ENCODE measurements at regions of chr17 and their contacts with region 1.

Region 1: GRCh38 chr17:35849469-35850348 is 19.0 kb downstream of the HEATR9 start:
- DNase-seq: peak; percentile 24 to 86 (median 61)
- ATAC-seq: peak; percentile 77
- H3K4me3 ChIP-seq: no peak overlapping the region
- H3K4me3 Mint-ChIP-seq: no peak overlapping the region
- H3K27ac ChIP-seq: peak overlapping the region in 1 of 2 experiments; percentile 34
- H3K27ac Mint-ChIP-seq: peak overlapping the region; percentile 53
- H3K4me1 ChIP-seq: no peaks in the 10 kb centered on the region
- H3K4me1 Mint-ChIP-seq: peaks cover 19% of the 10 kb centered on the region
- H3K27me3 ChIP-seq: no peaks in the 10 kb centered on the region
- H3K27me3 Mint-ChIP-seq: no peaks in the 10 kb centered on the region
- CTCF ChIP-seq: peak; percentile 92

Region 2: DNA sequence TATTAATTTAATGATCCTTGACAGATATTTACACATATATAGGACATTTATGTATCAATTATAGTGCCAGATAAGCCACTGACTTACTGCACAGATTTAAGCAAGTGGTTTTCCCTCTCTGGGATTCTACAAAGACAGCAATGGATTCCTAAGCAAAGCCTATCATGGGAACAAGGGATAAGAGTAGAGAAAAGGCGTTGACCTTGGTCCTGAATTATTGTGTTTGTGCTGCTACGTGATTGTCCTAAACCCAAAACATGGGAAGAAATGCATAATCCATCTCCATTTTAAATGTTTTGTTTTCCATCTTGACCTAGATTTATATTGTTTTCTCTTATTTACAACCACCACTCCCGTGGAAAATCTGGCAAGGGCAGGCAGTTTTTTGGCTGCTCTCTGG is 490.3 kb before region 1 on chr17:
- CTCF ChIA-PET with region 1: no interaction called
- POLR2A ChIA-PET with region 1: no interaction called
- intact Hi-C with region 1: no loop called
- DNase-seq: no peak
- ATAC-seq: no peak
- H3K4me3 ChIP-seq: no peak overlapping the region
- H3K4me3 Mint-ChIP-seq: no peak overlapping the region
- H3K27ac ChIP-seq: no peak overlapping the region
- H3K27ac Mint-ChIP-seq: no peak overlapping the region
- H3K4me1 ChIP-seq: no peaks in the 10 kb centered on the region
- H3K4me1 Mint-ChIP-seq: peaks cover 16% of the 10 kb centered on the region
- H3K27me3 ChIP-seq: no peaks in the 10 kb centered on the region
- H3K27me3 Mint-ChIP-seq: no peaks in the 10 kb centered on the region
- CTCF ChIP-seq: no peak

Region 3: GRCh38 chr17:35666967-35667532 is 182.7 kb before region 1 on chr17:
- CTCF ChIA-PET with region 1: no interaction called
- POLR2A ChIA-PET with region 1: no interaction called
- intact Hi-C with region 1: no loop called
- DNase-seq: no peak
- ATAC-seq: no peak
- H3K4me3 ChIP-seq: no peak overlapping the region
- H3K4me3 Mint-ChIP-seq: no peak overlapping the region
- H3K27ac ChIP-seq: no peak overlapping the region
- H3K27ac Mint-ChIP-seq: no peak overlapping the region
- H3K4me1 ChIP-seq: no peaks in the 10 kb centered on the region
- H3K4me1 Mint-ChIP-seq: no peaks in the 10 kb centered on the region
- H3K27me3 ChIP-seq: no peaks in the 10 kb centered on the region
- H3K27me3 Mint-ChIP-seq: no peaks in the 10 kb centered on the region
- CTCF ChIP-seq: no peak

Region 4: DNA sequence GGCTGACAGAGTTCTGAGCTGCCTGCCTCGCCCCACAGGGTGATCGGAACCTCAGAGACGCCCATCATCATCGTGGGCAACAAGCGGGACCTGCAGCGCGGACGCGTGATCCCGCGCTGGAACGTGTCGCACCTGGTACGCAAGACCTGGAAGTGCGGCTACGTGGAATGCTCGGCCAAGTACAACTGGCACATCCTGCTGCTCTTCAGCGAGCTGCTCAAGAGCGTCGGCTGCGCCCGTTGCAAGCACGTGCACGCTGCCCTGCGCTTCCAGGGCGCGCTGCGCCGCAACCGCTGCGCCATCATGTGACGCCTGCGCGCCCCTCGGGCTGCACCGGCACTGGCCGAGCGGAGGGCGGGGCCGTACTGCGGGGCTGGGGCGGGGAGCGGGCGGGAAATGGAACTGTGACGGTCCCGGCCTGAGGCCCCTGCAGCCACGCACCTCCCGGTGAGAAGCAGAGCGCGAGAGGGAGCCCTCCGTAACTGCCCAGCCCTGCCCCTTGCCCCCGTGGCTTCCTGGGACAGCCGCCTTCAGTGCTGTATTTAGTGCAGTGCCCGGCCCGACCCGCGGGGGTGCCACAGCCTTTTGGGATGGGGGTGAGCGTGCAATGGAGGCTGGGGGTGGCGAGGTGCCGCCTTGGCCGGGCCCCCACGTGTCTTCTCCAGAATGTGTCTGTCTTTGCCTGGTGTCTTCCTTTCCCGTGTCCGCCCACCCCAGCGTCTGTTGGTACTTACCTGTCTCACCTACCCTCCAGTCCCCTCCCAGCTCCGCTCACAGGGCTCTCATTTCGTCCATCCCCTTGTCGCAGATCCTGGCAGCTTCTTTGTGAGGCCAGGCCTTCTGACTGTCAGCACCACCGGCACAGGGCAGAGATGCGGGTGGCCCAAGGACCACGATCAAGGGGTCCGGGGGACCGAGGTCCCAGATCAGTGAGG is 108.4 kb before region 1 on chr17:
- CTCF ChIA-PET with region 1: no interaction called
- POLR2A ChIA-PET with region 1: no interaction called
- intact Hi-C with region 1: no loop called
- DNase-seq: peak in 2 of 9 experiments; percentile 26 to 39
- ATAC-seq: peak; percentile 63
- H3K4me3 ChIP-seq: no peak overlapping the region
- H3K4me3 Mint-ChIP-seq: peak overlapping the region; percentile 58
- H3K27ac ChIP-seq: no peak overlapping the region
- H3K27ac Mint-ChIP-seq: no peak overlapping the region
- H3K4me1 ChIP-seq: peaks cover 11% of the 10 kb centered on the region
- H3K4me1 Mint-ChIP-seq: peaks cover 6% of the 10 kb centered on the region
- H3K27me3 ChIP-seq: peaks cover 8 to 9% of the 10 kb centered on the region in 2 experiments
- H3K27me3 Mint-ChIP-seq: peaks cover 33% of the 10 kb centered on the region
- CTCF ChIP-seq: no peak

Region 5: DNA sequence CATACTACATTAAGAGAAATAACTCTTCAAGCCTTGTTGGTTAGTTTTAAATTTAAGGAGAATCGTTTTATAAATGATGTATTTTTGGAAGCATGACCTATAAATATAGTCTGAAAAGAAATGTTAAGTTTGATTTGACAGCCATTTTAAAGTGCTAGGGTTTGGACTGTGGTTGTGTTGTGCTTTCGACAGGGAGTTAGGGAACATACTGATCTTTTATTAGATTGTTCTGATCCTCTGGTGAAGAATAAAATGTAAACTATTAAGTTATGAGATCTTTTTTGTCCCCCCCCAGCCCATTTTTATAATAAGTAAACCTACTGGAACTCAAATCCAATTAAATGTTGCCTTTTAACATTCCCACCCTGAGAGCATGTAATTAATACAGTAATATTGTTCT is 28.4 kb before region 1 on chr17:
- CTCF ChIA-PET with region 1: no interaction called
- POLR2A ChIA-PET with region 1: no interaction called
- intact Hi-C with region 1: no loop called
- DNase-seq: no peak
- ATAC-seq: no peak
- H3K4me3 ChIP-seq: no peak overlapping the region
- H3K4me3 Mint-ChIP-seq: no peak overlapping the region
- H3K27ac ChIP-seq: no peak overlapping the region
- H3K27ac Mint-ChIP-seq: no peak overlapping the region
- H3K4me1 ChIP-seq: no peaks in the 10 kb centered on the region
- H3K4me1 Mint-ChIP-seq: peaks cover 35% of the 10 kb centered on the region
- H3K27me3 ChIP-seq: no peaks in the 10 kb centered on the region
- H3K27me3 Mint-ChIP-seq: no peaks in the 10 kb centered on the region
- CTCF ChIP-seq: no peak

Region 6: GRCh38 chr17:35865412-35866340 is 16.0 kb after region 1 on chr17:
- CTCF ChIA-PET with region 1: interaction called, 19 read pairs
- POLR2A ChIA-PET with region 1: interaction called, 18 read pairs
- intact Hi-C with region 1: no loop called
- DNase-seq: no peak
- ATAC-seq: no peak
- H3K4me3 ChIP-seq: no peak overlapping the region
- H3K4me3 Mint-ChIP-seq: no peak overlapping the region
- H3K27ac ChIP-seq: no peak overlapping the region
- H3K27ac Mint-ChIP-seq: no peak overlapping the region
- H3K4me1 ChIP-seq: no peaks in the 10 kb centered on the region
- H3K4me1 Mint-ChIP-seq: peaks cover 19% of the 10 kb centered on the region
- H3K27me3 ChIP-seq: no peaks in the 10 kb centered on the region
- H3K27me3 Mint-ChIP-seq: no peaks in the 10 kb centered on the region
- CTCF ChIP-seq: no peak

Region 7: DNA sequence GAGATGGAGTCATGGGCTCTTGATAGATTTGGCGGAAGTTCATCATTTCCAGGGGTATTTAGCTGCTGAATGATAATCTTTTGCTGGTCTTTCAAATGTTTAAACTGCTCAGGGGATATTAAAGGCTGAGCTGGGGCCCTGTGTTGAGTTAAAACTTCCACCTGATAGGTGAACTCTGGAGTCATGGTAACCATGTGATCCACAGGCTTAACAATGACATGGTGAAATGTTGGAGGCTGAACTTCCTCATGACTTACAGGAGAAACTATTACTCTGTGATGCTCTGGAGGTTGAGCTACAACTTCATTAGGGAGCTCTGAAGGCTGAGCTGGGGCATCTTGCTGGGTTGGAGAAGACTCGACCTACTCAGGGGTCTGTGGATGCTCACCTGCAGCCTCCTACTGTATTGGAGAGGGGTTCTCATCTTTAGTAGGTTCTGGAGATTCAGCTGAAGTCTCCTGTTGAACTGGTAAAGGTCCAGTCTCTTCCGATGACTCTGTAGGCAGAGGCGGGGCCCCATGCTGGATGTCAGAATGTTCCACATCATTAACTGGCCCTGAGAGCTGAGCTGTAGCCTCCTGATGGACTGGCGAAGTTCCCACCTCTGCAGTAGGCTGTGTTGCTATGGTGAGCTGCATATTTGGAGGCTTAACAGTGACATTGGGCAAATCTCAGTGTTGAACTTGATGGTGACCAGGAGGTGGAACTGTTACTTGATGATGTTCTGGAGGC is 56.6 kb after region 1 on chr17:
- CTCF ChIA-PET with region 1: interaction called, 5 read pairs
- POLR2A ChIA-PET with region 1: no interaction called
- intact Hi-C with region 1: loop called in 1 of 2 experiments (anchors 5 kb)
- DNase-seq: no peak
- ATAC-seq: no peak
- H3K4me3 ChIP-seq: no peak overlapping the region
- H3K4me3 Mint-ChIP-seq: no peak overlapping the region
- H3K27ac ChIP-seq: no peak overlapping the region
- H3K27ac Mint-ChIP-seq: no peak overlapping the region
- H3K4me1 ChIP-seq: no peaks in the 10 kb centered on the region
- H3K4me1 Mint-ChIP-seq: peaks cover 30% of the 10 kb centered on the region
- H3K27me3 ChIP-seq: no peaks in the 10 kb centered on the region
- H3K27me3 Mint-ChIP-seq: no peaks in the 10 kb centered on the region
- CTCF ChIP-seq: no peak

Region 8: DNA sequence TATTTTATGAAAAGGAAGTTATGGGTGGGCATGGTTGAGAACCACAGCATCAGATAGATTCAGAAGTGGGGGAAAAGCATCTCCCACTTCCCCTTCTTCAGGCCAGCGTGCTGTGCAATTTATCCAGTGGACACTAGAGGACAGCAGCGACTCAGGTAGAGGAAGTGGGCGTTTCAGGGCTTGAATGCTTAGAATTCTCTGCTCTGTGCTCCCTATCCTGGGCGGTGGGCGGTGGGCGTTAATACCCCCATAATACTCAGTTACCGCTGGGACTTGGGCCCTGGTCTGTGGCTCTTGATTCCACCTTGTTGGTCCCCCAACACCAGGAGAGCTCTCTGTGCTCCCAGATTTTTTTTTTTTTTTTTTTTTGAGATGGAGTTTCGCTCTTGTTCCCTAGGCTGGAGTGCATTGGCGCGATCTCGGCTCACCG is 97.5 kb after region 1 on chr17:
- CTCF ChIA-PET with region 1: interaction called, 8 read pairs
- POLR2A ChIA-PET with region 1: no interaction called
- intact Hi-C with region 1: loop called in 1 of 2 experiments (anchors 5 kb)
- DNase-seq: peak; percentile 25 to 76 (median 48)
- ATAC-seq: peak; percentile 91
- H3K4me3 ChIP-seq: no peak overlapping the region
- H3K4me3 Mint-ChIP-seq: no peak overlapping the region
- H3K27ac ChIP-seq: no peak overlapping the region
- H3K27ac Mint-ChIP-seq: no peak overlapping the region
- H3K4me1 ChIP-seq: peaks cover 3% of the 10 kb centered on the region
- H3K4me1 Mint-ChIP-seq: peaks cover 9% of the 10 kb centered on the region
- H3K27me3 ChIP-seq: no peaks in the 10 kb centered on the region
- H3K27me3 Mint-ChIP-seq: no peaks in the 10 kb centered on the region
- CTCF ChIP-seq: peak; percentile 72

Region 9: GRCh38 chr17:36072431-36073121 is 222.9 kb after region 1 on chr17:
- CTCF ChIA-PET with region 1: interaction called, 20 read pairs
- POLR2A ChIA-PET with region 1: no interaction called
- intact Hi-C with region 1: loop called in 1 of 2 experiments (anchors 10 kb)
- DNase-seq: peak; percentile 20 to 85 (median 58)
- ATAC-seq: peak; percentile 74
- H3K4me3 ChIP-seq: no peak overlapping the region
- H3K4me3 Mint-ChIP-seq: no peak overlapping the region
- H3K27ac ChIP-seq: peak overlapping the region in 1 of 2 experiments; percentile 47
- H3K27ac Mint-ChIP-seq: peak overlapping the region; percentile 47
- H3K4me1 ChIP-seq: peaks cover 10% of the 10 kb centered on the region
- H3K4me1 Mint-ChIP-seq: peaks cover 15% of the 10 kb centered on the region
- H3K27me3 ChIP-seq: no peaks in the 10 kb centered on the region
- H3K27me3 Mint-ChIP-seq: no peaks in the 10 kb centered on the region
- CTCF ChIP-seq: peak; percentile 57